Caco-2 (cell line): ENCODE measurements at regions of chr14 and their contacts with region 1.

Region 1: GRCh38 chr14:88380405-88380804 is 5.1 kb upstream of the SPATA7 start:
- DNase-seq: peak in 1 of 2 experiments; percentile 29
- H3K4me3 ChIP-seq: no peak overlapping the region
- H3K4me3 Mint-ChIP-seq: no peak overlapping the region
- H3K27ac Mint-ChIP-seq: no peak overlapping the region
- H3K4me1 ChIP-seq: no peaks in the 10 kb centered on the region
- H3K4me1 Mint-ChIP-seq: no peaks in the 10 kb centered on the region
- H3K27me3 ChIP-seq: no peaks in the 10 kb centered on the region
- H3K27me3 Mint-ChIP-seq: peaks cover 3% of the 10 kb centered on the region
- CTCF ChIP-seq: peak; percentile 38 to 47

Region 2: GRCh38 chr14:88233915-88234314 is 146.5 kb before region 1 on chr14:
- CTCF ChIA-PET with region 1: no interaction called
- POLR2A ChIA-PET with region 1: no interaction called
- intact Hi-C with region 1: loop called (anchors 1 kb)
- DNase-seq: peak; percentile 36 to 39
- H3K4me3 ChIP-seq: no peak overlapping the region
- H3K4me3 Mint-ChIP-seq: no peak overlapping the region
- H3K27ac Mint-ChIP-seq: no peak overlapping the region
- H3K4me1 ChIP-seq: no peaks in the 10 kb centered on the region
- H3K4me1 Mint-ChIP-seq: no peaks in the 10 kb centered on the region
- H3K27me3 ChIP-seq: no peaks in the 10 kb centered on the region
- H3K27me3 Mint-ChIP-seq: no peaks in the 10 kb centered on the region
- CTCF ChIP-seq: peak; percentile 25 to 33

Region 3: GRCh38 chr14:88270776-88271175 is 109.6 kb before region 1 on chr14:
- CTCF ChIA-PET with region 1: no interaction called
- POLR2A ChIA-PET with region 1: no interaction called
- intact Hi-C with region 1: loop called (anchors 2 kb)
- DNase-seq: peak; percentile 87 to 88
- H3K4me3 ChIP-seq: no peak overlapping the region
- H3K4me3 Mint-ChIP-seq: peak overlapping the region; percentile 33
- H3K27ac Mint-ChIP-seq: peak overlapping the region; percentile 79
- H3K4me1 ChIP-seq: peaks cover 20% of the 10 kb centered on the region
- H3K4me1 Mint-ChIP-seq: peaks cover 22% of the 10 kb centered on the region
- H3K27me3 ChIP-seq: no peaks in the 10 kb centered on the region
- H3K27me3 Mint-ChIP-seq: no peaks in the 10 kb centered on the region
- CTCF ChIP-seq: no peak

Region 4: GRCh38 chr14:88323523-88324199 is 56.7 kb before region 1 on chr14:
- CTCF ChIA-PET with region 1: no interaction called
- POLR2A ChIA-PET with region 1: interaction called, 4 read pairs
- intact Hi-C with region 1: loop called (anchors 2 kb)
- DNase-seq: peak in 1 of 2 experiments; percentile 52
- H3K4me3 ChIP-seq: peak overlapping the region; percentile 47
- H3K4me3 Mint-ChIP-seq: peak overlapping the region; percentile 77
- H3K27ac Mint-ChIP-seq: no peak overlapping the region
- H3K4me1 ChIP-seq: peaks cover 7% of the 10 kb centered on the region
- H3K4me1 Mint-ChIP-seq: no peaks in the 10 kb centered on the region
- H3K27me3 ChIP-seq: no peaks in the 10 kb centered on the region; the same call in none of the 2 replicates
- H3K27me3 Mint-ChIP-seq: peaks cover 17% of the 10 kb centered on the region
- CTCF ChIP-seq: no peak